PC-9 (cell line): ENCODE measurements at regions of chr1 and their contacts with region 1.

Region 1: DNA sequence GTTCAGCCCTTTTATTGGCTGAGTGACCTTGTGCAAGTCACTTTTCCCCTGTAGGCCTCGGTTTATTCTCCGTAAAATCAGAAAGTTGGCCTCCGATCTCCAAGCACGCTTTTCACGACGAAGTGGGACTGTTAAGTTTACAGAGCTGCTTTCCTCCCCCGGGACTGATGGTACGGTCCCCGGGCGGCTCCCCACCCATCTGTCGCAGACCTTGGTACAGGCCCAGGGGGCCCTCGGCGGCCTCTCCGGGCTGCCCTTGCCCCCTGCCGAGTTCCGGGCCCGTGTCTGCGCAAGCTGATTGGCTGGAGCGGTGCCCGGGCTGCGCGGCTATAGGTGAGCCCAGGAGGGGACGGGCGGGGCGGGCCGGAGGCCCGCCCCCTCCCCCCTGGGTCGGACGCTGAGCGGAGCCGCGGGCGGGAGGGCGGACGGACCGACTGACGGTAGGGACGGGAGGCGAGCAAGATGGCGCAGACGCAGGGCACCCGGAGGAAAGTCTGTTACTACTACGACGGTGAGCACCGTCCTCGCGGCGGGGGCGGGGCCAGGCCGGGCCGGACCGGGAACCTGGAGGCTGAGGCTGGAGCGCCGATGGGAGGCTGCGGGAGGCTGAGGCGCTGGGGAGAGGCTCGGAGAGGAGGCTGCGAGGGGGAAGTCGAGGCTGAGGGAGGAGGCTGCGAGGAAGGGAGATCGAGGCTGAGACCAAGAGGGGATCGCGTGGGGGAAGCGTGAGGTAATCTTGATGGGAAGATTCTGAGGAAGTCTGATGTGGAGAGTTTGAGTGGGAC is at the start of gene HDAC1:
- DNase-seq: peak; percentile 92 to 97
- H3K4me3 ChIP-seq: peak within 1 kb of the TSS; percentile 92
- H3K27ac ChIP-seq: peak within 1 kb of the TSS; percentile 56
- H3K4me1 ChIP-seq: peaks cover 34% of the 10 kb centered on the region
- H3K27me3 ChIP-seq: no peaks in the 10 kb centered on the region
- CTCF ChIP-seq: no peak
- total RNA-seq, gene HDAC1: 131 and 171 TPM in 2 replicates

Region 2: GRCh38 chr1:32122151-32122550 is 169.7 kb before region 1 on chr1:
- CTCF ChIA-PET with region 1: no interaction called
- POLR2A ChIA-PET with region 1: no interaction called
- intact Hi-C with region 1: no loop called
- DNase-seq: no peak
- H3K4me3 ChIP-seq: no peak overlapping the region
- H3K27ac ChIP-seq: no peak overlapping the region
- H3K4me1 ChIP-seq: no peaks in the 10 kb centered on the region
- H3K27me3 ChIP-seq: no peaks in the 10 kb centered on the region
- CTCF ChIP-seq: no peak

Region 3: DNA sequence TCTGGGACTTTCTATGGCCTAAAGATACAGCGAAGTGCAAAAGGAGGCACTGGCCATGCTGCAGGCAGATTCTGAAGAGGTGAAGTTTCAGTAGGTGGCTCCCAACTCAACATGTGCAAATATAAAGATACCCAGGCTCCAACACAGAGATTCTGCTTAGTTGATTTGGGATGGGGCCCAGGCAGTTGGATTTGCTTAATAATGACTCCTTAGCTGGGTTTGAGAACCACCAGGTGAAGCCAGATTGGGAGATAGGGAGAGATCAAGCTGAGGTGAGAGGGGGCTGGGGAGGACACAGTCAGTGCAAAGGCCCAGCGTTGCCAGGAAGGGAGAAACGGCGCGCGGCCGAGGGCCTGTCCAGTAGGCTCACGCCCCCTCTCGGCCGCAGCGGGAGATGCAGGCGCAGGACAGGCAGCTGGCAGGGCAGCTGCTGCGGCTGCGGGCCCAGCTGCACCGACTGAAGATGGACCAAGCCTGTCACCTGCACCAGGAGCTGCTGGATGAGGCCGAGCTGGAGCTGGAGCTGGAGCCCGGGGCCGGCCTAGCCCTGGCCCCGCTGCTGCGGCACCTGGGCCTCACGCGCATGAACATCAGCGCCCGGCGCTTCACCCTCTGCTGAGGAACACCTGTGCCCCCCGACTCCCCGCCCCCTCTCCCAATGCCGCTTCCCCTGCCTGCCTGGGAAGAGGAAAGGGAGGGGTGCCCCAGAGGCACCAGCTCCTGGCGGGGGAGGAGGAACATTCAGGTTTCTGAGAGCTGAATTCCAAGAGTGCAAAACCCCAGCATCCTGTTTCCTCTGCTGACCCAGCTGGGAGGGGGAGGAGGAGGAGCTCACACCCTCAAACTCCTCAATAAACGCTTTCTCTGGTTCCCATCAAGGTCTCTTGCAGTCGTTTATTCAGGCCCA is 43.7 kb before region 1 on chr1:
- CTCF ChIA-PET with region 1: interaction called, 3 read pairs
- POLR2A ChIA-PET with region 1: interaction called, 13 read pairs
- intact Hi-C with region 1: no loop called
- DNase-seq: peak in 1 of 2 experiments; percentile 55
- H3K4me3 ChIP-seq: no peak overlapping the region
- H3K27ac ChIP-seq: no peak overlapping the region
- H3K4me1 ChIP-seq: no peaks in the 10 kb centered on the region
- H3K27me3 ChIP-seq: no peaks in the 10 kb centered on the region
- CTCF ChIP-seq: peak; percentile 81

Region 4: GRCh38 chr1:32321712-32322291 is 29.9 kb after region 1 on chr1:
- CTCF ChIA-PET with region 1: no interaction called
- POLR2A ChIA-PET with region 1: interaction called, 29 read pairs
- intact Hi-C with region 1: no loop called
- DNase-seq: peak in 1 of 2 experiments; percentile 48
- H3K4me3 ChIP-seq: no peak overlapping the region
- H3K27ac ChIP-seq: peak overlapping the region; percentile 47
- H3K4me1 ChIP-seq: peaks cover 17% of the 10 kb centered on the region
- H3K27me3 ChIP-seq: no peaks in the 10 kb centered on the region
- CTCF ChIP-seq: no peak

Region 5: DNA sequence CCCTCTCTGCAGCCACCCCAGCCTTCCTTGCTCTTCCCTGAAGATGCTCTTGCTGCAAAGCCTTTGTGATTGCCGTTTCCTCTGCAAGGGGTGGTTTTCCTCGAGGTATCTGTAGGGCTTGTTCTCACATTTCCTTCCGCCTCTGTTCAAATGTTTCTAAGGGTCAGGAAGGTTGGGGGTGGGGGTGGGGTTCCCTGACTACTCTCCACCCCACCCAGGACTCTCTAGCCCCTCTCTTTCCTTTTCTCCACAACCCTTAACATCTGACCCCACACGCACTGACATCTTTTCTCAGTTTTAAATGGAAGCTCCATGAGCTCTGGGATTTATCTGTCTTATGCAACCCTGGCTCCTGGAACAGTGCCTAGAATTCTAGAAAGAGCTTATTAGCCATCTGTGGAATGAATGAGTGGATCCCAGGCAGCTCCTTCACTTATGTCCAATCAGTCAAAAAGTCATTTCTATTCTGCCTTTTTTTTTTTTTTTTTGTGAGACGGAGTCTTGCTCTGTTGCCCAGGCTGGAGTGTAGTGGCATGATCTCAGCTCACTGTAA is 937.1 kb after region 1 on chr1:
- CTCF ChIA-PET with region 1: no interaction called
- POLR2A ChIA-PET with region 1: interaction called, 19 read pairs
- intact Hi-C with region 1: no loop called
- DNase-seq: peak in 1 of 2 experiments; percentile 59
- H3K4me3 ChIP-seq: no peak overlapping the region
- H3K27ac ChIP-seq: no peak overlapping the region
- H3K4me1 ChIP-seq: peaks cover 23% of the 10 kb centered on the region
- H3K27me3 ChIP-seq: no peaks in the 10 kb centered on the region
- CTCF ChIP-seq: no peak